ENCODE measurements at regions of chr5 and their contacts with region 1.

Region 1: GRCh38 chr5:74660140-74660539 is 19.6 kb upstream of the ENC1 start:
- DNase-seq: no peak
- H3K4me3 ChIP-seq: no peak overlapping the region
- H3K27ac ChIP-seq: no peak overlapping the region
- H3K4me1 ChIP-seq: no peaks in the 10 kb centered on the region
- H3K27me3 ChIP-seq: no peaks in the 10 kb centered on the region
- CTCF ChIP-seq: no peak
- EP300 ChIP-seq: no peak
- POLR2A ChIP-seq: no peak
- RAD21 ChIP-seq: no peak

Region 2: GRCh38 chr5:73902327-73903051 is 757.7 kb before region 1 on chr5:
- CTCF ChIA-PET with region 1: interaction called, 10 read pairs
- POLR2A ChIA-PET with region 1: no interaction called
- DNase-seq: peak in 1 of 2 experiments; percentile 21
- H3K4me3 ChIP-seq: no peak overlapping the region
- H3K27ac ChIP-seq: no peak overlapping the region
- H3K4me1 ChIP-seq: no peaks in the 10 kb centered on the region
- H3K27me3 ChIP-seq: no peaks in the 10 kb centered on the region
- CTCF ChIP-seq: peak in 2 of 3 experiments; percentile 58 to 68; a peak in 3 of 4 replicates
- EP300 ChIP-seq: no peak
- POLR2A ChIP-seq: no peak
- RAD21 ChIP-seq: peak; percentile 85 to 89

Region 3: GRCh38 chr5:74673011-74673790 is 13.1 kb after region 1 on chr5:
- CTCF ChIA-PET with region 1: interaction called, 19 read pairs
- POLR2A ChIA-PET with region 1: interaction called, 3 read pairs
- DNase-seq: no peak
- H3K4me3 ChIP-seq: no peak overlapping the region
- H3K27ac ChIP-seq: no peak overlapping the region
- H3K4me1 ChIP-seq: peaks cover 0 to 6% (median 4%) of the 10 kb centered on the region in 4 experiments; a peak in 5 of 7 replicates
- H3K27me3 ChIP-seq: no peaks in the 10 kb centered on the region
- CTCF ChIP-seq: peak in 2 of 3 experiments; percentile 26 to 30; a peak in 2 of 4 replicates
- EP300 ChIP-seq: no peak
- POLR2A ChIP-seq: no peak
- RAD21 ChIP-seq: peak; percentile 61 to 68

Measured in H1 (cell line).